CD14-positive monocyte (primary cell): ENCODE measurements at regions of chr1 and their contacts with region 1.

Region 1: DNA sequence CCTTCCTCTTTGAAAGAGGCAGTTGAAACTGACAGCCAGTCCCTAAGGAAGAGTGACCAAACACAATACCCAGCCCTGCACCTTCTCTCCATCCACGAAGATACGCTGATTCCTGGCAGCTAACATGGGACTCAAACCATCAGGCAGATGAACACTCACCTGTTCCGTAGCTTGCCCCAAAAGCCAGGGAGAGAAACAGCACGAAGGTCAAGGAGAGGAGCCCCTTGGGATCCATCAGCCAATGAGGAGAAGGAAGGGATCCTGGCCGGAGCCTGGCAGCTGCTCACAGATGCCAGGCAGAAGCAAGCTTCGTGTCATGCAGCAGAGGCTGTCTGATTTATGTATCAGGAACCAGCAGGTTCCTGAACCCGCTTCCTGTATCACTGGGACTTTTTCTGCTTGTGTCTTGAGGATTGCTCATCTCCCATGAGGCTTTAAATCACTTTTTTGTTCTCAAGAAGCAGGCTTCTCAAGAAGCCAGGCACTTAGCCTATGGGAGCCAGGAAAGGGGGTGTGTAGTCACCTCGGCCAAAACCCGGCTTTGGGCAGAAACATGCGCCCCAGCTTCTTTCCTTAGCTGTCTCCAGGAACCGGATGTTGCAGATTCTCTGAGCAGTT is at the start of gene SLAMF1:
- DNase-seq: peak; percentile 75 to 90 (median 76)
- H3K4me3 ChIP-seq: peak within 1 kb of the TSS; percentile 3 to 64 (median 13)
- H3K4me3 Mint-ChIP-seq: peak within 1 kb of the TSS; percentile 63 to 82
- H3K27ac ChIP-seq: peak within 1 kb of the TSS; percentile 44 to 84
- H3K27ac Mint-ChIP-seq: peak within 1 kb of the TSS; percentile 32 to 87 (median 60)
- H3K4me1 ChIP-seq: peaks cover 19 to 29% of the 10 kb centered on the region in 2 donors
- H3K4me1 Mint-ChIP-seq: peaks cover 35% of the 10 kb centered on the region
- H3K27me3 ChIP-seq: no peaks in the 10 kb centered on the region
- H3K27me3 Mint-ChIP-seq: peaks cover 0 to 4% (median 1%) of the 10 kb centered on the region in 3 donors
- CTCF ChIP-seq: no peak
- polyA plus RNA-seq, gene SLAMF1: 0.13 to 0.65 TPM in 2 of 3 donors, not detected in the other

Region 2: DNA sequence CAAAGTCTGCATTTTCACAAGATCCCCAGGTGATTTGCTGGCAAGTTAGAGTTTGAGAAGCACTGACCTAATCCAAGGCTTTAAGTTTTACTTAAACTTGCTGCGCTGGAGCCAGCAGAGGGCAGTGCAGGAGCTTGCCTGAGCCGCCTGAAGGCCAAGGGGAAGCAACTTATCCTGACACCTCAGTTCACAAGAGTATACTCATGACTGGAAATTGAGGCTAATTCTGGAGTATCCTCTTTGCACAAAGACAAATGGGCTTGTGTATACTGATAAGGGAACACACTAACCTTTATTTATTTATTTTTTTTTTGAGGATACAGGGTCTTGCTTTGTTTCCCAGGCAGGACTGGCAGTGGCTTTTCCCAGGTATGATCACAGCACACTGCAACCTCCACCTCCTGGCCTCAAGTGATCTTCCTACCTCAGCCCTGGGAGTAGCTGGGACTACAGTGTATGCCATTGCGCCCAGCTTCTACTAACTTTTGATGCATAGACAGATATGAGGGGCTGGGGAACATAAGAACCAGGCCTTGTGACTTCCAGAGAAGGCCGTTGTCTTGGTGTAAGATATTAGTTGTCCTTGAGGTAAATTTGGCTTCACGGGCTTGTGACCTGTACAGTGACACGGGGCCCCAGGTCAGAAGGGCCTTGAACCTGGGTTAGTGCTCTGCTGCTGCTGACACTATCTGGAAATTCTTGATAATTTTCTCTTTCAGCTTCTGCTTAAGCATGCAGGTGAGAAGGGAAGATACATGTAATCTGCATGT is 29.0 kb after region 1 on chr1:
- intact Hi-C with region 1: loop called in 1 of 2 experiments (anchors 1 kb)
- DNase-seq: peak; percentile 63 to 79 (median 64)
- H3K4me3 ChIP-seq: no peak overlapping the region
- H3K4me3 Mint-ChIP-seq: no peak overlapping the region
- H3K27ac ChIP-seq: peak overlapping the region in 1 of 2 donors; percentile 38
- H3K27ac Mint-ChIP-seq: peak overlapping the region; percentile 22 to 73 (median 63)
- H3K4me1 ChIP-seq: peaks cover 22 to 34% of the 10 kb centered on the region in 2 donors
- H3K4me1 Mint-ChIP-seq: peaks cover 6% of the 10 kb centered on the region
- H3K27me3 ChIP-seq: no peaks in the 10 kb centered on the region
- H3K27me3 Mint-ChIP-seq: no peaks in the 10 kb centered on the region
- CTCF ChIP-seq: peak; percentile 90

Region 3: DNA sequence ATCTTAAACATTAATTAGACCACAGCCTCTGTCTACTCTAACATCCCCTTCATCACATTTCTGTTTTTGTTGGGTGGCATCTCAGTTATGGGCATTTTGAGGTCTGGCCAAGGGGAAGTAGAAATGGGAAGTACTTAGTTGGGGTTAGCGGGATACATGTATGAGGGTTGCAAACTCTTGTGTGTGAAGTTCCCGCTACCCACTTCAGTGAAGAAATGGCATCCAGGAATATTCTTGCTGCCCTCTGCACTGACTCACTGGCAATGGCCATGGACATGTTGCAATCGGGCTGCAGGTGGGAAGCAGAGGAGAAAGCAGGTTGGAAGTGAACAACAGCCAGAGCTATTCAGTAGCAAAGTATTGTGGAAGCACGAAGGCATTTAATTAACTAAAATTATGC is 57.4 kb after region 1 on chr1:
- intact Hi-C with region 1: no loop called
- DNase-seq: peak; percentile 88 to 97 (median 94)
- H3K4me3 ChIP-seq: peak overlapping the region in 1 of 3 experiments; percentile 99
- H3K4me3 Mint-ChIP-seq: peak overlapping the region in 1 of 2 donors; percentile 84
- H3K27ac ChIP-seq: peak overlapping the region; percentile 57 to 82
- H3K27ac Mint-ChIP-seq: no peak overlapping the region
- H3K4me1 ChIP-seq: peaks cover 83% of the 10 kb centered on the region in 2 donors
- H3K4me1 Mint-ChIP-seq: peaks cover 11% of the 10 kb centered on the region
- H3K27me3 ChIP-seq: no peaks in the 10 kb centered on the region
- H3K27me3 Mint-ChIP-seq: no peaks in the 10 kb centered on the region
- CTCF ChIP-seq: no peak